ENCODE measurements at regions of chr2 and their contacts with region 1.

Region 1: GRCh38 chr2:55609938-55610578 is 7.4 kb downstream of the PPP4R3B start:
- DNase-seq: no peak
- ATAC-seq: no peak
- H3K4me3 ChIP-seq: no peak overlapping the region
- H3K4me3 Mint-ChIP-seq: no peak overlapping the region
- H3K27ac ChIP-seq: no peak overlapping the region
- H3K27ac Mint-ChIP-seq: no peak overlapping the region
- H3K4me1 ChIP-seq: peaks cover 0 to 2% of the 10 kb centered on the region in 2 donors
- H3K4me1 Mint-ChIP-seq: peaks cover 31% of the 10 kb centered on the region
- H3K27me3 ChIP-seq: no peaks in the 10 kb centered on the region
- H3K27me3 Mint-ChIP-seq: no peaks in the 10 kb centered on the region
- CTCF ChIP-seq: no peak

Region 2: DNA sequence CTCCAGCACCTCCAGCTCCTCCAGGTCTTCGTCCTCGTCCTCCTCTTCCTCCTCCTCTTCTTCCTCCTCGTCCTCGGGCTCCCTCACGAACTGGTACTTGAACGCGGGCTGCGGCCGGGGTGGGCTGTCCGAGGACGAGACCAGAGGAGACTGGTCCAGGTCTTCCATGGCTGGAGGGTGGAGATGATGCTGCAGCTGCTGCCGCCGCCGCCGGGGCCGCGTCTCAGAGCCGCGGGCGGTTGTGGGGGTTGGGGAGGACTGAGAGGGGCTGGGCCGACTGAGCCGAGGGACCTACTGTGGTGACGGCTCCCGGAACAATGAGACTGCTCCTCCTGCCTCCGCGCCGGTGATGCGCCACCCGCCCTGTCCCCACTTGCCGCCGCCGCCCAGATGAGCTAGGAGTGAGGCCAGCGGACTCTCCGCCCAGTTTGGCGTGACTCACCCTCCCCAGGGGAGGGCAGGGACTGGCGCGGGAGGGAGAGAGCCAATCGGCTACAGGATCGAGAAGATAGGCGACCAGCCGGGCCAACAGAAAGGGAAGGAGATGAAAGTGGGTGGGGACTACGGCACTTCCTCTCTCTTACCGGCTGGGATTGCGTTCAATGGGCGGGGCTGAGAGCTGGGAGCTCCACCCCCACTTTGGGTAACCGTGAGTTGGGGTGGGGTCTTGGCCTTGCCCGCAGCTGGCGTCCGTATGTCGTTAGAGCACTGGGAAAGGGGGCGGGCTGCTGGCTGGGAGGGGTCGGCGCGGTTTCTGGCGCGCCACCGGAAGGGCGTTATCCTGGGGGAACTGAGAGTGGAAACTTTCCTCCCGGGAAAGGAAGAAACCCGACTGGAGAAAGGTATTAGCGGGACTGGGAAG is 559.7 kb before region 1 on chr2 and contains the start of gene RTN4:
- CTCF ChIA-PET with region 1: no interaction called
- POLR2A ChIA-PET with region 1: no interaction called
- intact Hi-C with region 1: no loop called
- DNase-seq: peak; percentile 99
- ATAC-seq: peak; percentile 85
- H3K4me3 ChIP-seq: peak within 1 kb of the TSS; percentile 67 to 95 (median 89)
- H3K4me3 Mint-ChIP-seq: peak within 1 kb of the TSS; percentile 100
- H3K27ac ChIP-seq: peak within 1 kb of the TSS; percentile 82 to 89
- H3K27ac Mint-ChIP-seq: peak within 1 kb of the TSS; percentile 100
- H3K4me1 ChIP-seq: peaks cover 48 to 52% of the 10 kb centered on the region in 2 donors
- H3K4me1 Mint-ChIP-seq: peaks cover 71% of the 10 kb centered on the region
- H3K27me3 ChIP-seq: no peaks in the 10 kb centered on the region
- H3K27me3 Mint-ChIP-seq: no peaks in the 10 kb centered on the region
- CTCF ChIP-seq: no peak
- total RNA-seq, gene RTN4: 63.3 and 65.9 TPM in 2 replicates

Region 3: GRCh38 chr2:55560855-55561254 is 49.2 kb before region 1 on chr2:
- CTCF ChIA-PET with region 1: no interaction called
- POLR2A ChIA-PET with region 1: no interaction called
- intact Hi-C with region 1: loop called (anchors 5 kb)
- DNase-seq: no peak
- ATAC-seq: no peak
- H3K4me3 ChIP-seq: no peak overlapping the region
- H3K4me3 Mint-ChIP-seq: no peak overlapping the region
- H3K27ac ChIP-seq: no peak overlapping the region
- H3K27ac Mint-ChIP-seq: no peak overlapping the region
- H3K4me1 ChIP-seq: no peaks in the 10 kb centered on the region
- H3K4me1 Mint-ChIP-seq: no peaks in the 10 kb centered on the region
- H3K27me3 ChIP-seq: no peaks in the 10 kb centered on the region
- H3K27me3 Mint-ChIP-seq: no peaks in the 10 kb centered on the region
- CTCF ChIP-seq: no peak

Measured in B cell (primary cell).